ENCODE measurements at regions of chr2 and their contacts with region 1.

Region 1: GRCh38 chr2:189142893-189143759 is 36.4 kb downstream of the COL5A2 start:
- DNase-seq: peak; percentile 68
- H3K4me3 Mint-ChIP-seq: no peak overlapping the region
- H3K27ac Mint-ChIP-seq: no peak overlapping the region
- H3K4me1 Mint-ChIP-seq: peaks cover 3% of the 10 kb centered on the region
- H3K27me3 Mint-ChIP-seq: no peaks in the 10 kb centered on the region

Region 2: GRCh38 chr2:188326669-188327301 is 816.3 kb before region 1 on chr2:
- CTCF ChIA-PET with region 1: no interaction called
- intact Hi-C with region 1: no loop called
- DNase-seq: no peak
- H3K4me3 Mint-ChIP-seq: no peak overlapping the region
- H3K27ac Mint-ChIP-seq: no peak overlapping the region
- H3K4me1 Mint-ChIP-seq: no peaks in the 10 kb centered on the region
- H3K27me3 Mint-ChIP-seq: no peaks in the 10 kb centered on the region

Region 3: DNA sequence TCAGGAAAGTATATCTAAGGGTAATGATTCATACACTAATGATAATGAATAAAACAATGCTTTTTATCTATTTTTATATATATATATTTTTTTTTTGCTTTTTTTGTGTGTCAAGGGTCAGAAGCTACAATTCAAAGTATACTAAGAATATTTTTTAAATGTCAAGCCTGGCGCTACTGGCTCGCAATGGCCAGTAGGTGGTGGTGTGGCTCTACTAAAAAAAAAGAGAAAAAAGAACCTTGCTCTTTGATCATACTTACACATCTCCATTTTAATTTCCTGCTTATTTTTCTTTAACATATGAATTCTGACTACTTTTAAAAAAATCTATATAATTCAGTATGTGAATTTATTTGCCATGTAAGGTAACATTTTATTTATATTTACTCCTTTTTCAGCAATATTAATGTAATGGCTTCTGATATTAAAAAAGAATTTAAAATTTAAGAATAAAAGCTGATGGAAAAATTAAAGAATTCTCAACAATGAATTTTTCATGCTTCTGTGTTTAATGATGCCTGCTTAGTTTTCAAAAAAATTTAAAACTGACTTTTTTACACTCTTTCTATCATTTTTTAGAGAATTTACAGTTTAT is 618.5 kb before region 1 on chr2:
- CTCF ChIA-PET with region 1: no interaction called
- intact Hi-C with region 1: loop called (anchors 1 kb)
- DNase-seq: peak; percentile 35
- H3K4me3 Mint-ChIP-seq: no peak overlapping the region
- H3K27ac Mint-ChIP-seq: no peak overlapping the region
- H3K4me1 Mint-ChIP-seq: no peaks in the 10 kb centered on the region
- H3K27me3 Mint-ChIP-seq: peaks cover 2% of the 10 kb centered on the region

Region 4: GRCh38 chr2:189115126-189115525 is 28.0 kb before region 1 on chr2:
- CTCF ChIA-PET with region 1: interaction called, 24 read pairs
- intact Hi-C with region 1: loop called (anchors 2 kb)
- DNase-seq: no peak
- H3K4me3 Mint-ChIP-seq: no peak overlapping the region
- H3K27ac Mint-ChIP-seq: no peak overlapping the region
- H3K4me1 Mint-ChIP-seq: peaks cover 22% of the 10 kb centered on the region
- H3K27me3 Mint-ChIP-seq: no peaks in the 10 kb centered on the region

Region 5: GRCh38 chr2:189129971-189130370 is 13.2 kb before region 1 on chr2:
- CTCF ChIA-PET with region 1: interaction called, 16 read pairs
- intact Hi-C with region 1: no loop called
- DNase-seq: no peak
- H3K4me3 Mint-ChIP-seq: no peak overlapping the region
- H3K27ac Mint-ChIP-seq: no peak overlapping the region
- H3K4me1 Mint-ChIP-seq: no peaks in the 10 kb centered on the region
- H3K27me3 Mint-ChIP-seq: no peaks in the 10 kb centered on the region

Region 6: GRCh38 chr2:189309331-189309730 is 166.2 kb after region 1 on chr2:
- CTCF ChIA-PET with region 1: interaction called, 5 read pairs
- intact Hi-C with region 1: loop called (anchors 1 kb)
- DNase-seq: no peak
- H3K4me3 Mint-ChIP-seq: no peak overlapping the region
- H3K27ac Mint-ChIP-seq: peak overlapping the region; percentile 50
- H3K4me1 Mint-ChIP-seq: peaks cover 73% of the 10 kb centered on the region
- H3K27me3 Mint-ChIP-seq: no peaks in the 10 kb centered on the region

Region 7: DNA sequence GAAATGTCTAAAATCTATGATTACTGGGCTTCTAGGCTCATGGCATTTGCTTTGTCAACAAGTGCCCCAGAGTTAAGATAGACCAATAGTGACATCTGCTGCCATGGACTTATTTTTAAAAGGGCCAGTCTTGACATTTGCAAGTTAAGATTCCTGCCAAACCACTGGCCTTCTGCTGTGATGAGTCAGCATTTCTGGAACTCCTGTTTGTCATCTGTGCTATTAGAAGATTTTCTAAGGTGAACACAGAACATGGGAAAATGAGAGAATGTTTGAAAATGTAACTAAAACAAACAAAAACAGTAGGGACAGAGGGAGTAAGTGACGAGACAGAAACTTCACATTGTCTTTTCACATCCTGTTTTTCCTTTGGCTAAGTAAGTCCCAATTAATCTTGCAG is 204.4 kb after region 1 on chr2:
- CTCF ChIA-PET with region 1: interaction called, 12 read pairs
- intact Hi-C with region 1: loop called (anchors 1 kb)
- DNase-seq: peak; percentile 28
- H3K4me3 Mint-ChIP-seq: no peak overlapping the region
- H3K27ac Mint-ChIP-seq: no peak overlapping the region
- H3K4me1 Mint-ChIP-seq: peaks cover 17% of the 10 kb centered on the region
- H3K27me3 Mint-ChIP-seq: no peaks in the 10 kb centered on the region

Region 8: DNA sequence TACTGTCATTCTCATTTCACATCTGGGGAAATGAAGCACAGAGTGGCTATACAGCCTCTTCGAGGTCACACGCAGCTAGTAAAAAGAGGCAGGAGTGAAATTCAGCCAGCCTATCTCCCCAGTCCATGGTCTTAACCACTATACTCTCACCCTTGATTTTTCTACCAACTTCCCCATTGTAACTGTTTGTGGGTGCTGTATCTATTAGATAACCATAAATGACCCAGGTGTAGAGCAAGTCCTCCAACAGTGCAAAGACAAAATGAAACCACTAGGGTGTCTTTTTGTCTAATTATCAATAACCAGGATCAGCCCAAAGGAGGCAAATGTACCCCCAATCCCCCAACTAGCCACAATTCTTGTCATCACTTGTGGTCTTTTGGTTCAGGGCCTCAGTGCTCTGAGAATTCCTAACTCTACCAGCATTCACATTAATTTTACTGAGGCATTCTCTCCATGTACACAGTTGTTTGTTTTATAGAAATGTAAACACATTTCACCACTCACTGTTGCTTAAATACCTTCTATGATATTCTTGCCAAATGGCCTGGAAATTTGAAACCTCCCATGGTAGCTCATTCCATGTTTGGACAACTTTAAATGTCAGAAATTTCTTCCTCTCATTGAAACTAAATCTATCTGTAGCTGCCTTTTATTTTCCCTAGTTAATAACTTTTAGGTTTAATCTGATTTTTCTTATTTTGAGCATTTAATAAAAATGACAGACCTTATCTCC is 378.7 kb after region 1 on chr2:
- CTCF ChIA-PET with region 1: no interaction called
- intact Hi-C with region 1: no loop called
- DNase-seq: no peak
- H3K4me3 Mint-ChIP-seq: no peak overlapping the region
- H3K27ac Mint-ChIP-seq: no peak overlapping the region
- H3K4me1 Mint-ChIP-seq: no peaks in the 10 kb centered on the region
- H3K27me3 Mint-ChIP-seq: no peaks in the 10 kb centered on the region